Activated naive CD4-positive, alpha-beta T cell treated with anti-CD3 and anti-CD28 coated beads for 36 hours (primary cell): ENCODE measurements at regions of chr10 and their contacts with region 1.

Region 1: GRCh38 chr10:88848499-88848898 is 3.1 kb downstream of the ANKRD22 start:
- DNase-seq: no peak
- H3K4me3 Mint-ChIP-seq: no peak overlapping the region
- H3K27ac Mint-ChIP-seq: peak overlapping the region; percentile 25
- H3K4me1 Mint-ChIP-seq: peaks cover 13% of the 10 kb centered on the region
- H3K27me3 Mint-ChIP-seq: peaks cover 12% of the 10 kb centered on the region

Region 2: GRCh38 chr10:88791924-88792323 is 56.6 kb before region 1 on chr10:
- CTCF ChIA-PET with region 1: no interaction called
- intact Hi-C with region 1: loop called (anchors 1 kb)
- DNase-seq: peak; percentile 25
- H3K4me3 Mint-ChIP-seq: no peak overlapping the region
- H3K27ac Mint-ChIP-seq: no peak overlapping the region
- H3K4me1 Mint-ChIP-seq: peaks cover 19% of the 10 kb centered on the region
- H3K27me3 Mint-ChIP-seq: peaks cover 4% of the 10 kb centered on the region

Region 3: DNA sequence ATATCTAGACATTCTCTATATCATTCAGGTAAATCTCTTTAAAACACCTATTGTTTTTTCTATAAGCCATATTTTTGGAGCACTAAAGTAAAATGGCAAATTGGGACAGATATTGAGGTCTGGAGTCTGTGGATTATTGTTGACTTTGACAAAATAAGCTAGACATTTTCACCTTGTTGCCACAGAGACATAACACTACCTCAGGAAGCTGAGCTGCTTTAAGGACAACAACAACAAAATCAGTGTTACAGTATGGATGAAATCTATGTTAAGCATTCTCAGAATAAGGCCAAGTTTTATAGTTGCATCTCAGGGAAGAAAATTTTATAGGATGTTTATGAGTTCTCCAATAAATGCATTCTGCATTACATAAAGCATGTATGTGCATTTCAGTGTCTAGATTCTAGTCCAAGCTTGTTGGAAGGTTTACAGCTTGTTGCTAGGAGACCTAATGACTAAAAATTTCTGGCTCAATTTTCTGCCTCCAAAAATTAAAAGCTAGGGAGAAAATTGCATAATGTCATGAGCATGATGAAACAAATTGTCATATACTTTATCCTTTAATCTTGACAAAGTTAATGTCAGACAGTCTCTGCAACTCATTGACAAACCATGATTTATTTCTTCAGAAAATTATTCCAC is 27.6 kb before region 1 on chr10:
- CTCF ChIA-PET with region 1: no interaction called
- intact Hi-C with region 1: loop called (anchors 1 kb)
- DNase-seq: no peak
- H3K4me3 Mint-ChIP-seq: no peak overlapping the region
- H3K27ac Mint-ChIP-seq: no peak overlapping the region
- H3K4me1 Mint-ChIP-seq: peaks cover 27% of the 10 kb centered on the region
- H3K27me3 Mint-ChIP-seq: no peaks in the 10 kb centered on the region

Region 4: DNA sequence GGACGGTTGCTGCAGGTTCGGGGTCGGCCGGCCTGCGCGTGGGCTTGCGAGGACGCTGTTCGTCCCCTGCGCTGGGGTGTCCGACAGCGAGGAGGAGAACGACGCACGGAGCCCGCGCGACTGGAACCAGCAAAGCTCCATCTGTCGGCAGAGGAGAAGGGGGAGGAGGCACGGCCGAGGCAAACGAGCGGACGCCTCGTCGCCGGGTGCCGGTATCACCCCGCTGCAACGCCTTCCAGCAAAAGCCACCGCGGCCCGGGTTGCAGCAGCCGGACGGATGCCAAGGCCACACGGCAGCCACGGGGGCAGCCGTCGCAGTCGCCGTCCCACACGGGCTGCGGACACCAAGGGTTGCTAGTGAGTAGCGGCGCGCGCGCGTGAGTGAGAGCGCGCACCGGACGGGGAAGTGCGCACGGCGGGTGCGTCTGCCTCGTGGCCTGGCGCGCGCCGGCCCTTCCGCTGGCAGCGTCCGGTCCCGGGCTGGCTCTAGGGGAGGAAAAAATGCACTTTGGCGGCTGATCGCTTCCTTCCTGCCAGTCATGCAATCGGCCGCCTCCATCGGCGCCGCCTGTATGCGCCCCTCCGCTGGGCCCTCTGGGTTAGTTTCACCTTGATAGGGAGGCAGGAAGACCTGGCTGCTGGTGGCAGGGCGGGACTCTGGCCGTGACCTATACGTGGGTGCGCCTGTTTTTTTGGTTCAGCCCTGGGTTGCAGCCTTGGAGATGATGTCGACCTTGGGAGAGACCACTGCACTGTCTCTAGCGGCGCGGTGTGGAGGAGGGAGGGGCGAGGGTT is 32.0 kb after region 1 on chr10:
- CTCF ChIA-PET with region 1: no interaction called
- intact Hi-C with region 1: loop called (anchors 1 kb)
- DNase-seq: peak; percentile 82
- H3K4me3 Mint-ChIP-seq: peak overlapping the region; percentile 95
- H3K27ac Mint-ChIP-seq: peak overlapping the region; percentile 97
- H3K4me1 Mint-ChIP-seq: peaks cover 58% of the 10 kb centered on the region
- H3K27me3 Mint-ChIP-seq: no peaks in the 10 kb centered on the region

Region 5: GRCh38 chr10:88901206-88901983 is 52.9 kb after region 1 on chr10:
- CTCF ChIA-PET with region 1: interaction called, 4 read pairs
- intact Hi-C with region 1: loop called (anchors 1 kb)
- DNase-seq: no peak
- H3K4me3 Mint-ChIP-seq: peak overlapping the region; percentile 2
- H3K27ac Mint-ChIP-seq: peak overlapping the region; percentile 82
- H3K4me1 Mint-ChIP-seq: peaks cover 59% of the 10 kb centered on the region
- H3K27me3 Mint-ChIP-seq: no peaks in the 10 kb centered on the region

Region 6: GRCh38 chr10:89163265-89163995 is 314.9 kb after region 1 on chr10:
- CTCF ChIA-PET with region 1: no interaction called
- intact Hi-C with region 1: loop called (anchors 5 kb)
- DNase-seq: peak; percentile 69
- H3K4me3 Mint-ChIP-seq: peak overlapping the region; percentile 33
- H3K27ac Mint-ChIP-seq: peak overlapping the region; percentile 5
- H3K4me1 Mint-ChIP-seq: peaks cover 36% of the 10 kb centered on the region
- H3K27me3 Mint-ChIP-seq: peaks cover 7% of the 10 kb centered on the region